Naive thymus-derived CD8-positive, alpha-beta T cell (primary cell): ENCODE measurements at regions of chr12 and their contacts with region 1.

Region 1: DNA sequence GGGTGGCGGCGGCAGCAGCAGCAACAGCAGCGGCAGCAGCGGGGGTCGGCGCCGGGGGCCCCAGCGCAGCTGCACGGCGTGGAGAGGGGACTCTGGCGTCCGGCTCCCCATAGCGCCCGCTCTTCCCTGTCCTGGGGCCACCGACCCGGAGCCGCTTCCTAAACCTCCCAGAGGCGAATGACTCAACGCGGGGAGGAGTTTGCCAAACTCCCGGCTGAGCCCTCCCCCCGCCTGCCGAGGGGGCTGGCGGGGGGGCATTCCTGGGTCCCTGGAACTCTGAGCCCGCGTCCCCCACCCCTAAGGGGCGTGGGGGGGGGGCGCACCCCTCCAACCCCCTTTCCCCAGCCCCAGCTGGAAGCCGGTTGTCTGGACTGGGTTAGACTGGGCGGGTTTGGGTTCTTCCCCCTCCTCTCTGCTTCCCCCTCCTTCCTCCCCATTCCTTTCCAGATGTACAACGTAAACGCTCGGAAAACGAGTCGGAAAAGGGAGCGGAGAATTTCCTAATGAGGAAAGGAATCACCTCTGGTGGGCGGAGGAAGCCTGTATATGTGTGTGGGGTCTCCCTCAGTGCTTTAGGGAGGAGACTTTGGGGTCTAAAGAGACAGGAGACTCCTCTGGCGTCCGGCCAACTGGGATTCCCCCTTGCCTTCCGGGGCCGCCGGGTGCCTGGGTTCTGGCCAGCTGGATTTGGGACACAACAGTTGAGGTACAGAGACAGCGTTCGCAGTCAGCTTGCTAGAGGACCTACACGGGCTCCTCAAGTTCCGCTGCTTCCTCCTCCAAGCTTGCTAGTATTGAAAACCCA is at the start of gene ITGA5:
- DNase-seq: peak in 6 of 10 donors; percentile 36 to 62 (median 46)
- ATAC-seq: peak; percentile 26 to 27
- H3K4me3 Mint-ChIP-seq: peak within 1 kb of the TSS; percentile 77 to 98 (median 94)
- H3K27ac Mint-ChIP-seq: peak within 1 kb of the TSS; percentile 93 to 100 (median 98)
- H3K4me1 Mint-ChIP-seq: peaks cover 35 to 72% (median 61%) of the 10 kb centered on the region in 4 donors
- H3K27me3 Mint-ChIP-seq: no peaks in the 10 kb centered on the region
- polyA plus RNA-seq, gene ITGA5: 13.4 to 44.5 (median 19.7) TPM

Region 2: GRCh38 chr12:54398995-54399793 is 20.1 kb before region 1 on chr12:
- POLR2A ChIA-PET with region 1: interaction called, 99 read pairs
- DNase-seq: peak; percentile 77 to 96 (median 87)
- ATAC-seq: peak; percentile 94 to 99
- H3K4me3 Mint-ChIP-seq: no peak overlapping the region
- H3K27ac Mint-ChIP-seq: peak overlapping the region in 8 of 10 donors; percentile 0 to 74 (median 36)
- H3K4me1 Mint-ChIP-seq: peaks cover 5 to 10% (median 10%) of the 10 kb centered on the region in 4 donors
- H3K27me3 Mint-ChIP-seq: no peaks in the 10 kb centered on the region

Region 3: GRCh38 chr12:54404061-54405004 is 15.0 kb before region 1 on chr12:
- POLR2A ChIA-PET with region 1: interaction called, 99 read pairs
- DNase-seq: peak; percentile 38 to 80 (median 62)
- ATAC-seq: peak; percentile 63 to 73
- H3K4me3 Mint-ChIP-seq: peak overlapping the region in 2 of 10 donors; percentile 7 to 20
- H3K27ac Mint-ChIP-seq: peak overlapping the region; percentile 61 to 97 (median 92)
- H3K4me1 Mint-ChIP-seq: peaks cover 17 to 45% (median 42%) of the 10 kb centered on the region in 4 donors
- H3K27me3 Mint-ChIP-seq: no peaks in the 10 kb centered on the region

Region 4: DNA sequence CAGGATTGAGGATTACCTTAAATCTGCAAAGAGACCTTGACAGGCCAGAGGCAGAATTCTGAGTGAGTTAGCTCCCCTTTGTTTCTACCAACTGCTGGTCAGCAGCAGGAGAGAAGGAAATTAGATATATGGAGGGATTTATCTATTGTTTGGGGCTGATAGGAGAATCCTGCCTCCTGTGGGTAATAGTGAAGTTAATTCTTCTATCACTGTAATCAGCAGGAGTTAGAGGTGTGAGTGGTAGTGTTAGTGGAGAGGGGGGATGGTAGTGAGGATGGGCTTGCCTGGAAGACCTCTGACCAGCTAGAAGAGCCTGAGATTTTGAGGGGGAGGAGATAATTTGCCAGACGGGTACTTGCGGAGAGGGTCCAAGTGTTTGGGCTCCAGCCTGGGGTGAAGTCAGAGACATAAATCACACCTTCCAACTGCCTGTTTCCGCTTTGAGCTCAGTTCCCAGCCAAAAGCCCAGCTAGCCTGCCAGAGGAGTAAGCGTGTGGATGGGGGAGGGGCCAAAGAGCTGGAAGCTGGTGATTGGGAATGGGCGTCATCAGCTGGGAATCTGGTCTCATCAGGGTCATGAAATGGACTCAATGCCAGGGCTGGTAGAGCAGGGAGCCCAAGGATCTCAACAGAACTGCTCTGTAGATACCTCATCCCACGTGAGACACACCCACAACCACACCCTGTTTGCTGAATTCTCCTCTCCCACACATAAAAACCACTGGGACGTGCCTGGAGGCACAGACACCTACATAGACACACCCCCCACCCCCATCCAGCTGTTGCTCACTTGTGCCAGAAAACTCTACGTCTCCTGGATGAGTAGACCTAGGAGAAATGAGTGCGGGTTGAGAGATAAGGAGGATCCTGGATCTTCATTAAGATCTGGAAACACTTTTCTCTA is 12.9 kb after region 1 on chr12:
- POLR2A ChIA-PET with region 1: interaction called, 142 read pairs
- DNase-seq: no peak
- ATAC-seq: no peak
- H3K4me3 Mint-ChIP-seq: peak overlapping the region in 3 of 10 donors; percentile 26 to 52 (median 28)
- H3K27ac Mint-ChIP-seq: peak overlapping the region in 8 of 10 donors; percentile 0 to 85 (median 60)
- H3K4me1 Mint-ChIP-seq: peaks cover 24 to 45% (median 30%) of the 10 kb centered on the region in 4 donors
- H3K27me3 Mint-ChIP-seq: peaks cover 0 to 2% (median 0%) of the 10 kb centered on the region in 5 donors

Region 5: GRCh38 chr12:54439521-54440255 is 20.4 kb after region 1 on chr12:
- POLR2A ChIA-PET with region 1: interaction called, 142 read pairs
- DNase-seq: peak in 3 of 10 donors; percentile 63 to 74 (median 66)
- ATAC-seq: peak; percentile 79 to 93
- H3K4me3 Mint-ChIP-seq: no peak overlapping the region
- H3K27ac Mint-ChIP-seq: peak overlapping the region in 8 of 10 donors; percentile 12 to 83 (median 66)
- H3K4me1 Mint-ChIP-seq: peaks cover 4 to 9% (median 7%) of the 10 kb centered on the region in 4 donors
- H3K27me3 Mint-ChIP-seq: no peaks in the 10 kb centered on the region